Activated B cell treated with CpG ODN at 0.5 μM for 24 hours (primary cell): ENCODE measurements at regions of chr11 and their contacts with region 1.

Region 1: GRCh38 chr11:3775736-3776406 is 21.5 kb downstream of the NUP98 start:
- DNase-seq: no peak
- ATAC-seq: no peak
- H3K4me3 Mint-ChIP-seq: no peak overlapping the region
- H3K27ac Mint-ChIP-seq: no peak overlapping the region
- H3K4me1 Mint-ChIP-seq: no peaks in the 10 kb centered on the region
- H3K27me3 Mint-ChIP-seq: no peaks in the 10 kb centered on the region
- CTCF ChIP-seq: no peak

Region 2: GRCh38 chr11:3684129-3684818 is 91.6 kb before region 1 on chr11:
- CTCF ChIA-PET with region 1: no interaction called
- POLR2A ChIA-PET with region 1: interaction called, 12 read pairs
- intact Hi-C with region 1: no loop called
- DNase-seq: no peak
- ATAC-seq: no peak
- H3K4me3 Mint-ChIP-seq: no peak overlapping the region
- H3K27ac Mint-ChIP-seq: no peak overlapping the region
- H3K4me1 Mint-ChIP-seq: no peaks in the 10 kb centered on the region
- H3K27me3 Mint-ChIP-seq: no peaks in the 10 kb centered on the region
- CTCF ChIP-seq: no peak

Region 3: GRCh38 chr11:3732671-3733436 is 43.0 kb before region 1 on chr11:
- CTCF ChIA-PET with region 1: interaction called, 3 read pairs
- POLR2A ChIA-PET with region 1: interaction called, 7 read pairs
- intact Hi-C with region 1: loop called (anchors 5 kb)
- DNase-seq: no peak
- ATAC-seq: no peak
- H3K4me3 Mint-ChIP-seq: no peak overlapping the region
- H3K27ac Mint-ChIP-seq: no peak overlapping the region
- H3K4me1 Mint-ChIP-seq: no peaks in the 10 kb centered on the region
- H3K27me3 Mint-ChIP-seq: no peaks in the 10 kb centered on the region
- CTCF ChIP-seq: no peak